ENCODE measurements at regions of chr19 and their contacts with region 1.

Region 1: DNA sequence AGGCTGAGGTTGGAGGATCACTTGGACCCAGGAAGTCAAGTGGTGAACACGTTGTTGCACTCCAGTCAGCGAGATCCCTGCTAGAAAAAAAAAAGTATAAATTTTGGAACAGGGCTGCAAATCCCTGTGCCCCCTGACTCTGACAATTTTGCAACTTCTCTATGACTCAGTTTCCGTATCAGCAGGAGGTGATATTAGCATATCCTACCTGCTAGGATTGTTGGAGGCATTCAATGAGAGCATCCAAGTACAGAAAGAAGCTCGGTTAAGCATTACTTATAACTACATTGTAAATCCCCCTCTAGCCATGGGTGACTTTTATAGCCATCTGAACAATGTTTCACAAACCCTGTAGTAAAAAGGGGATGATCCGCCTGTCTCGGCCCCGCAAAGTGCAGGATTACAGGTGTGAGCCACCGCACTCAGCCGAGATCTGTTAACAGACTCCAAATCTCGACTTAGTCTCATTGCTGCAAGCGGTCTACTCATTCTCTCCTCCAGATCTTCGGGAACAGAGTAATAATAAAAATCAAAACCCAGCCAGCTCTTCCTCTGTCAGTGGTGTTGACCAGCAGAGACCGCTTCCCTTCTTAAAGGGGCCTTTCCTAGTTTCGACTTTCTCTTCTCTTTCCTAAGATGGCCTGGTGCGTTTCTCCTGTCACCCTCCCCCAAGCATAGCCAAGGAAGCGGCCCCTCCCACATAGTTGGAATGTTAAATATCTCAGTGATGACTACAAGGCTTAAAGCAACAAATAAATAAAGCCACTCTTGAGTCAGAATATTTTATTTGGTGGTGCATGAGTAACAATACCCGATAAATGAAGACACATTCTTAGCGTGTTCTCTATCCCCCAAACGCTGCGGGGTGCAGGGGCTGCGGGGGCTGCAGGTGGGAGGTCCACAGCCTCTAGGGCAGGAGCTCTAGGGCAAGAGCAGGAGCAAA is 10.3 kb upstream of the BICRA start:
- DNase-seq: no peak
- H3K4me3 ChIP-seq: peak overlapping the region; percentile 69
- H3K27ac ChIP-seq: peak overlapping the region; percentile 85
- H3K4me1 ChIP-seq: peaks cover 25% of the 10 kb centered on the region
- H3K27me3 ChIP-seq: no peaks in the 10 kb centered on the region
- CTCF ChIP-seq: no peak

Region 2: DNA sequence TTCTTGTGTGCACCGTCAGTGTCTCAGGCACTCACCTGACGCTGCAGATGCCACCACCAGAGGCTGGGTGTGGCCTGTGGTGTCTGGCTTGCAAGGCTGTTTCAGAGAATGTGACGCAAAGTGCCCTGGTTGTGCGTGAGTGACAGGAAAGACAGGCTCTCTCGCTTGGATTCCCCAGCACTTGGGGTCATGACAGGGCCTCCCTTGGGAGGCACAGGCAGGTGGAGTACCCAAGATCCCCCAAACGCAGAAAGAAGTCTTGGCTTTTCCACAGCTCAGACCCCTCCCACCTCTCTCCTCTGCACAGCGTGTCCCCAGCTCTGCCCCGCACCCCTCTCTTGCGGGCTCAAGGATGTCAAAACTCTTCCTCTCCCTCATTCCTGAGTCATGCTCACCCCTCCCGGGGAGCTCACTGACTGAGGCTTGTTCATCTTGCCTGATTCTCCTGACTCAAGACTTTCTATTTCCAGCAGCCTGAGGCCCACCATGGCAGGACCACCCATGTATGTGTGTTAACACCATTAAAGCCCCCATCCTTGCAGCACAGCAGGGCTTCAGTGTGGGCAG is 228.6 kb before region 1 on chr19:
- intact Hi-C with region 1: no loop called
- DNase-seq: no peak
- H3K4me3 ChIP-seq: no peak overlapping the region
- H3K27ac ChIP-seq: no peak overlapping the region
- H3K4me1 ChIP-seq: no peaks in the 10 kb centered on the region
- H3K27me3 ChIP-seq: no peaks in the 10 kb centered on the region
- CTCF ChIP-seq: no peak

Region 3: GRCh38 chr19:47523473-47523872 is 75.2 kb before region 1 on chr19:
- intact Hi-C with region 1: loop called (anchors 10 kb)
- DNase-seq: no peak
- H3K4me3 ChIP-seq: no peak overlapping the region
- H3K27ac ChIP-seq: peak overlapping the region; percentile 80
- H3K4me1 ChIP-seq: peaks cover 34% of the 10 kb centered on the region
- H3K27me3 ChIP-seq: no peaks in the 10 kb centered on the region
- CTCF ChIP-seq: no peak